Ascending aorta (tissue), 2 donors: ENCODE measurements at regions of chr4 and their contacts with region 1.

Region 1: DNA sequence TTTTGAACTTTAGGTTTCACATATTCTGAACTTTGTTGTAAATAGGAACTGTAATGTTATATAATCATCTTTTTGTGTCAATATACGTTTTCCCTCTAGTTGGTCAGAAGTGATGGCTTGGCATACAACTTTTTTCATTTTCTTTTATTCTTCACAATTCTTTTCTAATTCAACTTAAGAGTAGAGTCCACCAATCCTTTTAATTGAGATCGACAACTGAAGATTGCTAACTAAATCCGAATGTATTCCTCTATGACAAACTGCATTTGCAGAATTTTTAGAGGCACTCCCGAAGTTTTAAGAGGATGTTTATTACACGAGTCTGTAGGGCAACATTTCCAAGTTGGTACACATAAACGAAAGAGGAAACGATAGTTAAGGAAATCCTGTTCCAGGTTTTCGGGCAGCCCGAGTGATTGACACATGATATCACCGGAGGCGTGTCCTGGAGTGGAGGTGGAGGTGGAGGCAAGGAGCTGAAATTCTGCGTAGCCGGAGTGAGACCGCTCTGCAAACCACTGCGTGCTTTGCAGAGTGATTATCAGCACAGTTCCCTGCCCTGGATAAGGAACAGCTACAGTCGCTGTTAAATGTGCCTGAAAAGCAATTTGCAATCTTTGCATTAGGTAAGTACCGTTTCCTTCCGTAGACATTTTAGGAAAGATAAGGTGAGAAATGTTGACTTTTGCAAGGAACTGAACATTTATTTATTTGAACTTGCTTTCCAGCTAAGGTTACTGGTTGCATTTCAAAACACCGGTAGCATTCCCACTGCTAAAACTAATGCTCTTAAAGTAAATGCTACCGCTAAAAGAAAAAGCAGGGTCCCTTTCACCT is at the start of gene SPRY1:
- DNase-seq: peak; percentile 55 to 94
- H3K4me3 ChIP-seq: peak within 1 kb of the TSS; percentile 78 to 84
- H3K27ac ChIP-seq: peak within 1 kb of the TSS; percentile 84 to 93
- H3K4me1 ChIP-seq: no peaks in the 10 kb centered on the region
- H3K27me3 ChIP-seq: no peaks in the 10 kb centered on the region
- CTCF ChIP-seq: no peak
- total RNA-seq, gene SPRY1: 348 TPM

Region 2: DNA sequence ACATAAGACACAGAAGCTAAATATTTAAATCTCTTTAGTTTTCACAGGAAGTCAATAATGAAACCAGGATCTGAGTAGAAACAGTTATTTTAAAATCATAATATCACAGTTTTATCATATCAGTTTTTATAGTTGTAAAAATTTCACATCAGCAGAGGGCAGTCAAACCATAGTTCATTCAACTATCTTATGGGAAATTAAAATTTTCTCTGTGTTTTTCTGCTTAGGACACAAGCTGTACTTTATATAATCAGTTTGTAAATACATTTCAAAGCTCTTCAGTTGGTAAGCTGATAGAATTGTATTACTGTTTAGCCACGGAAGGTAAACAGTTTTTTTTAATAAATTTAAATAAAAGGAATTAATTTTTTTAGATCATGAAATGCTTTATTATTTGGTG is 269.3 kb before region 1 on chr4:
- intact Hi-C with region 1: loop called (anchors 5 kb)
- DNase-seq: no peak
- H3K4me3 ChIP-seq: no peak overlapping the region
- H3K27ac ChIP-seq: no peak overlapping the region
- H3K4me1 ChIP-seq: peaks cover 0 to 3% of the 10 kb centered on the region in 2 donors
- H3K27me3 ChIP-seq: no peaks in the 10 kb centered on the region
- CTCF ChIP-seq: peak; percentile 22 to 45 (median 39)

Region 3: GRCh38 chr4:123661080-123661737 is 264.7 kb after region 1 on chr4:
- intact Hi-C with region 1: loop called (anchors 2 kb)
- DNase-seq: no peak
- H3K4me3 ChIP-seq: no peak overlapping the region
- H3K27ac ChIP-seq: no peak overlapping the region
- H3K4me1 ChIP-seq: no peaks in the 10 kb centered on the region
- H3K27me3 ChIP-seq: no peaks in the 10 kb centered on the region
- CTCF ChIP-seq: peak; percentile 28 to 50 (median 42)

Region 4: GRCh38 chr4:123832173-123833026 is 435.9 kb after region 1 on chr4:
- intact Hi-C with region 1: loop called (anchors 5 kb)
- DNase-seq: peak in 1 of 2 donors; percentile 82
- H3K4me3 ChIP-seq: no peak overlapping the region
- H3K27ac ChIP-seq: peak overlapping the region; percentile 56 to 76
- H3K4me1 ChIP-seq: peaks cover 3 to 19% of the 10 kb centered on the region in 2 donors
- H3K27me3 ChIP-seq: no peaks in the 10 kb centered on the region
- CTCF ChIP-seq: no peak

Region 5: DNA sequence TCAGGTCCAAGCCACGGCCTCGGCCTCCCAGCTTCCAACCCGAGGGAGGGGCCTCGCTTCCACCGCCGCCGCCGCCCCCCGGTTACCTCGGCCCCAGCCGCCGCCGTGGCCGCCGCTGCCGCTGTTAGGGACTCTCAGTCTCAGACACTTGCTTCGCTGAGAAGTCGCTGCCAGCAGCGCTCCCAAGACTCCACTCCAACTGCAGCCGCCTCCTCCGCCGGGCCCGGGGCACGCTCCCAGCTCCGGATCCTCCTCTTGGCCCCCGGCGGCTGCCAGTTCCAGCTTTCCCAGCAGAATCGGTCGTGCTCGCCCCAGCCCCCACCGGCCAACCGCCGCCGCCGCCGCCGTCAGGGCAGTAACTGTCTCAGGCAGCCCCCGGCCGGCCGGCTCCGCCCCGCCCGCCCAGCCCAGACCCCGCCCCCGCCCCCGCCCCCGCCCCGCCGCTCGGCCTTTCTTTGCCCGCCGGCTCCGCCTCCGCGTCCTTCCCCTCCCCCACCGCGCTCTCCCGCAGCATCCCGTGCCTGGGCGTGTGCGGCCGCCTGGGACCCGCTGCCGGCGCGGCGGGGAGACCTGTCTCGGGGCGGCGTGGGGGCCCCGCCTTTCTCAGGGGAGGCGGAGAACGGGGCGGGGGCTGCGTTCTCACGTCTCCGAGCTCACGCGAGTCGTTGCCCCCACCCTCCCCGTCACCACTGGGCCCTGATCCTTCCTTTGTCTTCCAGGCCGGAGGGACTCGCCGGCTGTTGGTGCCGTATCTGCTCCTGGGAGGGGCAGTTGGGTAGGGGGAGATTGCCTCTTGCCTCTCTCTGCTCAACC is 1316.1 kb after region 1 on chr4 and contains the start of gene ANKRD50:
- intact Hi-C with region 1: loop called (anchors 5 kb)
- DNase-seq: peak; percentile 66 to 94
- H3K4me3 ChIP-seq: peak within 1 kb of the TSS; percentile 72 to 98
- H3K27ac ChIP-seq: peak within 1 kb of the TSS; percentile 90 to 97
- H3K4me1 ChIP-seq: peaks cover 0 to 18% of the 10 kb centered on the region in 2 donors
- H3K27me3 ChIP-seq: no peaks in the 10 kb centered on the region
- CTCF ChIP-seq: no peak
- total RNA-seq, gene ANKRD50: 26.9 TPM